ENCODE measurements at regions of chr2 and their contacts with region 1.

Region 1: GRCh38 chr2:133886735-133887660 is 318.7 kb upstream of the NCKAP5 start:
- DNase-seq: peak; percentile 64
- CTCF ChIP-seq: peak; percentile 48

Region 2: DNA sequence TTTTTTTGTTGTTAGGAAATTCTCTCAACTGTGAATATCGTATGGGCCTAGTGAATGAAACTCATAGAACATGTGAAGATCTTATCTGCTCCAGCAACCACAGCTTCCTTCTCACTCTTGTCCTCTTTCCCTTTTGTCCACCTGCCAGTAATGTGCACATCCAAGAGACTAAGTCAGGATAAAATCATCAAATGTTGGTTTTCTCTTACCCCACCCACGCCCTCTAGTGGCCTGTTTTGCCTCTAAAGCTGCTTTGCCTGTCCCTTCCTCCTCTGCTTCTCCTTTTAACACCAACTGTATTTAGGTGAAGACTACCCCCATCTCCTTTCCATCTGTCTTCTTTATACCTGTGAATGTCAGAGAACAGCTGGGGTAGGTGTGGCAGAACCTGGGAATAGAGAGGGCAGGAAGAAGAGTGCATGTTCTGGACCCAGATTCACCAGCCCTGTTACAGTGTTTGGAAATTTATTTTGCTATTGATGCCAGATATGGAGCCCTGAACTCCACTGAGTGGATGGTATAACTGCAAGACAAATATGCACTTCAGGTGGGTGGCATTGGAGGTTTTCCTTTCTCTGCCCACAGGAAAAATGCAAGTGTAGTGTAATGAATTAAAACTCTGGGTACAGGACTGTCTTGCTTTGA is 358.5 kb after region 1 on chr2:
- in situ Hi-C with region 1: loop called (anchors 25 kb)
- DNase-seq: peak; percentile 54
- CTCF ChIP-seq: peak; percentile 72

Region 3: GRCh38 chr2:134275058-134275862 is 388.3 kb after region 1 on chr2:
- in situ Hi-C with region 1: no loop called
- DNase-seq: peak; percentile 58
- CTCF ChIP-seq: no peak